ENCODE measurements at regions of chr4 and their contacts with region 1.

Region 1: GRCh38 chr4:83917572-83917971 is 381.7 kb downstream of the GPAT3 start:
- DNase-seq: no peak
- H3K4me3 ChIP-seq: no peak overlapping the region
- H3K27ac ChIP-seq: no peak overlapping the region
- H3K4me1 ChIP-seq: no peaks in the 10 kb centered on the region
- H3K27me3 ChIP-seq: no peaks in the 10 kb centered on the region
- CTCF ChIP-seq: no peak

Region 2: GRCh38 chr4:83810428-83810827 is 107.1 kb before region 1 on chr4:
- CTCF ChIA-PET with region 1: no interaction called
- POLR2A ChIA-PET with region 1: no interaction called
- intact Hi-C with region 1: no loop called
- DNase-seq: no peak
- H3K4me3 ChIP-seq: no peak overlapping the region
- H3K27ac ChIP-seq: no peak overlapping the region
- H3K4me1 ChIP-seq: no peaks in the 10 kb centered on the region
- H3K27me3 ChIP-seq: no peaks in the 10 kb centered on the region
- CTCF ChIP-seq: no peak

Region 3: GRCh38 chr4:83866571-83867227 is 50.9 kb before region 1 on chr4:
- CTCF ChIA-PET with region 1: no interaction called
- POLR2A ChIA-PET with region 1: no interaction called
- intact Hi-C with region 1: no loop called
- DNase-seq: no peak
- H3K4me3 ChIP-seq: no peak overlapping the region
- H3K27ac ChIP-seq: no peak overlapping the region
- H3K4me1 ChIP-seq: no peaks in the 10 kb centered on the region
- H3K27me3 ChIP-seq: no peaks in the 10 kb centered on the region
- CTCF ChIP-seq: no peak

Region 4: DNA sequence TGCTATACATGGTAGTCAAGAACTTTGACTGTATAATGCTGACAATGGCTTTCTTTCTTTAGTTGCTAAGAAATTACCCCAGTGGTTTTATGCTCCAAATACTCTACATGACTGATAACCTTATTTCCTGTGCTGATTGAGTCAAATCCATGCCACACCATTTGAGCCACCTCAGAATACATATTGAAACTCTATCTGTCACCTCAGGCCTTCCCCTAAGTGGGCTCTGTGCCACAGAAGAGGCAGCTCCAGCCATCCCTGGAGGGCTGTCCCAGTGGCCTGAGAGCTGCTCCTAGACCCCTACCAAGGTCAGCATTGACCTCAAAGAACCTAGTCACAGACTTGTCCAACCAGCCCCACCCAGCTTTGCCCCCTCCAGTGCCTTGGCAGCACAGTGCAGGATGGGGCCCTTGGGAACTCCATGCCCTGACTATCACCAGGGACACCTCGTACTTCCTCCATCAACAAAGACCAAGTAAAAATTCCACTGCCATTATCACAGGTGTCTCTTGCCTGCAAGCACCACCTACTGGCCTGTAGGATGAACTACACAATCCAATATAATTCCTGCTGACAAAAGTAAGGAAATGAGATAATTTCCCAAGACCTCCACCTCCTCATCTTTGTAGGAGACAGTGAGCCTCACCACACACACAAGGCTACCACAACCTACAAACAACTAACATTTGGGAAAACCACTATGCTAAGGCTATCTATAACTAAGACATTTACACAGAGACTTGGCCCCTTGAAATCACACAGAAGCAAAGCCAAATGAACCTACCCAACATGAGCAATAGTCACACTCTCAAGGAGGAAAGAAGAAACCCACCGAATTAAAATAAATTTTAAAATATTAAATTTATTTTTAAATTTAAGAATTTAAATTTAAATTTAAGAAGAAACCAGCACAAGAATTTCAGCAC is 341.6 kb after region 1 on chr4:
- CTCF ChIA-PET with region 1: no interaction called
- POLR2A ChIA-PET with region 1: no interaction called
- intact Hi-C with region 1: loop called (anchors 10 kb)
- DNase-seq: peak; percentile 24
- H3K4me3 ChIP-seq: no peak overlapping the region
- H3K27ac ChIP-seq: no peak overlapping the region
- H3K4me1 ChIP-seq: no peaks in the 10 kb centered on the region
- H3K27me3 ChIP-seq: no peaks in the 10 kb centered on the region
- CTCF ChIP-seq: peak; percentile 57

Measured in A673 (cell line).